Dorsolateral prefrontal cortex (tissue), 120 donors: ENCODE measurements at regions of chr7 and their contacts with region 1.

Region 1: GRCh38 chr7:22082886-22083703 is 137.4 kb upstream of the CDCA7L start:
- DNase-seq: peak; percentile 78 to 95 (median 89)
- H3K4me3 ChIP-seq: peak overlapping the region; percentile 37 to 85 (median 72)
- H3K27ac ChIP-seq: peak overlapping the region; percentile 13 to 99 (median 92)
- H3K27me3 ChIP-seq: peaks cover 0 to 4% (median 0%) of the 10 kb centered on the region in 45 donors
- CTCF ChIP-seq: peak; percentile 56 to 100 (median 96)

Region 2: DNA sequence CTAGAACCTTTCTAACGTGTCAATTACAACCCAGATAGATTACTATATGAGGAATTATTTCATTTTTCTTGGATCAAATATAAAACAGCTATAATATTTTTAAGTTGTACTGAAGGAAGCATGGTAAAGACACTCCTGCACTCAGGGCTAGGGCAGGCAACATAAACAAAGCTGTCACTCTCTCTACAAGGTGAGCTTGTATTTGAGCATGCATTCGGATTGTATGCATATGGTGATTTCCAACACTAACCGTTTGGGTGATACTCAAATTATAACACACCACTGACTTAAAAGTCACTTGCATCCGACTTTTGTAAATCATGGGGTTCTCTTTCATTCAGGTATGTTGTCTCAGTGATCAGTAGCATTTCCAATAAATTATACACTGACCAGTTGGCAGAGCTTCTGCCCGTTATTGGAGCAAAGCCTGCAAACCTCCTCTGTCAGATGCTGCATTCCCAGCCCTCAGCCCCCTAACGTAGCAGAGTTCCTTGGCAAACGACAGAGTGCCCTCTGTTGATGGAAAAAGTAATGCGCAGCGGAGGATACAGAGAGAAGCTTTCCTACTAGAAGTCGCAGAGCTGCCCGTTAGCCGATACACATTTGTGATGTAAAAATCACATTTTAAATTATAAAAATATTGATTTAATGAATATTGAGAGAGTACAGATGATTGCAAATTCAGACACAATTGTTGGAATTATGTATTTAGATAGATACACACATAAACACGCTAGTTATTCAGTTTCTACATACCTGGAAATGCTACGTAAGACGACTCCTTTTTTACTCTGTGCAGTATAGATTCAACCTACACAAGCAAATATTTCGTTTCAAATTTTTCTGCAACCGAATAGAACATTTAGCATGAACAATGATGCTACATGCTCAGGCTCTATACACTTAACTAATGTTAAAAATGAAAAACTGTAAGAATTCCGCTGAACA is 829.1 kb before region 1 on chr7:
- intact Hi-C with region 1: loop called (anchors 5 kb)
- DNase-seq: peak in 8 of 10 donors; percentile 24 to 62 (median 46)
- H3K4me3 ChIP-seq: no peak overlapping the region
- H3K27ac ChIP-seq: no peak overlapping the region
- H3K27me3 ChIP-seq: peaks cover 0 to 92% (median 49%) of the 10 kb centered on the region in 45 donors
- CTCF ChIP-seq: peak in 55 of 56 donors; percentile 22 to 75 (median 59)

Region 3: DNA sequence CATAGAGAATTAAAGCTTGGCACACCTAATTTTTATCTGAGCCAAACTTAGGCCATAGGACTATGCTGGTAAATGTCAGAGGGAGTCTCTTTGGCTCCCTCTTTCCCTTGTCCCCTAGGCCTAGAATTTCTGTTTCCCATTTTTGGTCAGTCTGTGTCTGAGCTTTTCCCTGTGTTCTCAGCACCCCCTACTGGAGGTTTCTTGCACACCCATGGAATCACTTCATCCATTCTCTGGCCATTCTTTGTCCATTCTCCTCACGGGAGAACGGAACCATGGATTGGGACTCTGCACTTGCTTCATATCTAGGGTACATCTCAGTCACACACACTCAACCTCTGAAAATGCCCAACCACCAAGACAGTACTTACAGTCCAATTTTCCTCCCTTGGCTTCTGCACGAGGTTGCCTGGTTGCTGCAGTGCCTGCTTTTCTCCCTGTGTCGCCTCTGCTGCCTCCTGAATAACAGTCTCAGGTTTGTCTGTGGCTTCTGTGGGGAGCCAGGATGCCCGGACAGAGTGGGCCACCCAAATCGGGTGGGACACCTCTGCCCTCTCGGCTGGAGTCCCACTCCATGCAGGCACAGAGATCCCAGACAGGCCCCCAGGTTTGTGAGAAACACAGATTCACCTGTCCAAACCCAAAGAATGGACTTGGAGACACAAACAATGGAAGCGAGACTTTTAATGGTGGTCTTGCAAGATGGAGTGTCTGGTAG is 575.3 kb before region 1 on chr7:
- intact Hi-C with region 1: loop called in 1 of 2 experiments (anchors 10 kb)
- DNase-seq: peak in 3 of 10 donors; percentile 11 to 53 (median 51)
- H3K4me3 ChIP-seq: no peak overlapping the region
- H3K27ac ChIP-seq: no peak overlapping the region
- H3K27me3 ChIP-seq: no peaks in the 10 kb centered on the region
- CTCF ChIP-seq: peak; percentile 49 to 83 (median 70)

Region 4: DNA sequence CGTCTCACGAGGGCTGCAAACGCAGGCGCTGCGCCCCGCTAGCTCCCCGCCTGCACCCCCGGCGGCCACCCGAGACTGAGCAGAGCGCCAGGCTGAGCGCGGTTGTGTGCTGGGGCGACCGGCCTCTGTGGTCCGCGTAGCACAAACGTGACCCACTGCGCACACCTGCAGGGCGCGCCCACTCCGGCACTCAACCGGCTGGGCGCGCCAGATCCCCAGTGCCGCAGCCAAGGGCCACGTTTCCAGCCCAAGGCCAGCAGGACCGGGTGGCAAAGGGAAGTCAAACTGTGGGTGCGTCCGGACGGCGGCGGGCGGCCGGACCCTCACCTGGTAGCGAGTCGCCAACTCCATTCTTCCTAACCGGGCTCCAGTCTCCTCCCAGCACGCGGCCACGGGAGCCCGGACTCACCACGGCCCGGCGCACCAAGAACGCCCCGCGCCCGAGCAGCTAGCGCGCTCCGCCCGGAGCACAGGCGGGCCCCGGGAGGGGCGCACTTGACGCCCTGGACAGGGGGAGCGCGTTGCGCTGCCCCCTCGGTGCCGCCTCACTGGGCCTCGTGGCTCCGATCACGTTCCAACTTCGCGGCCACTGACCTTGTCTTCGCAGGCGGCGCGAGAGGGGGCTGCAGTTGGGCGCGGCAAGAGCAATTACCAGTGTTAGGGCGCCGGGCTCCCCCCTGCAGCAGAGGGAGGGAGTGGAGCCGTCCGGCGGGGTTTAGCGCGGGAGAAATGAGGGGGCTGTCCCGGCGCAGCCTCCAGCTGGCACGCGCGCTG is 137.5 kb before region 1 on chr7 and contains the start of gene CDCA7L:
- intact Hi-C with region 1: loop called (anchors 5 to 10 kb)
- DNase-seq: peak; percentile 35 to 76 (median 57)
- H3K4me3 ChIP-seq: peak within 1 kb of the TSS; percentile 41 to 85 (median 70)
- H3K27ac ChIP-seq: peak within 1 kb of the TSS in 49 of 59 donors; percentile 19 to 88 (median 67)
- H3K27me3 ChIP-seq: peaks cover 0 to 36% (median 7%) of the 10 kb centered on the region in 45 donors
- CTCF ChIP-seq: peak in 12 of 56 donors; percentile 3 to 33 (median 18)
- total RNA-seq, gene CDCA7L: 4.7 to 28.4 (median 10.8) TPM

Region 5: GRCh38 chr7:22214000-22214399 is 130.9 kb after region 1 on chr7:
- intact Hi-C with region 1: no loop called
- DNase-seq: no peak
- H3K4me3 ChIP-seq: peak overlapping the region in 6 of 59 donors; percentile 1 to 25 (median 12)
- H3K27ac ChIP-seq: peak overlapping the region in 58 of 59 donors; percentile 11 to 99 (median 93)
- H3K27me3 ChIP-seq: no peaks in the 10 kb centered on the region
- CTCF ChIP-seq: no peak